Naive thymus-derived CD8-positive, alpha-beta T cell (primary cell): ENCODE measurements at regions of chr6 and their contacts with region 1.

Region 1: GRCh38 chr6:26223650-26224546 is 136.7 kb downstream of the HFE start:
- DNase-seq: peak; percentile 54 to 85 (median 71)
- ATAC-seq: peak; percentile 89 to 90
- H3K4me3 Mint-ChIP-seq: no peak overlapping the region
- H3K27ac Mint-ChIP-seq: no peak overlapping the region
- H3K4me1 Mint-ChIP-seq: peaks cover 4 to 25% (median 14%) of the 10 kb centered on the region in 4 donors
- H3K27me3 Mint-ChIP-seq: no peaks in the 10 kb centered on the region

Region 2: GRCh38 chr6:26183581-26184366 is 40.1 kb before region 1 on chr6:
- POLR2A ChIA-PET with region 1: interaction called, 25 read pairs
- DNase-seq: peak; percentile 22 to 82 (median 58)
- ATAC-seq: peak; percentile 92 to 94
- H3K4me3 Mint-ChIP-seq: peak overlapping the region; percentile 93 to 100 (median 98)
- H3K27ac Mint-ChIP-seq: peak overlapping the region; percentile 70 to 98 (median 95)
- H3K4me1 Mint-ChIP-seq: peaks cover 27 to 48% (median 46%) of the 10 kb centered on the region in 4 donors
- H3K27me3 Mint-ChIP-seq: no peaks in the 10 kb centered on the region

Region 3: GRCh38 chr6:26240154-26241032 is 16.5 kb after region 1 on chr6:
- POLR2A ChIA-PET with region 1: interaction called, 669 read pairs
- DNase-seq: peak; percentile 39 to 90 (median 80)
- ATAC-seq: peak; percentile 82 to 85
- H3K4me3 Mint-ChIP-seq: peak overlapping the region; percentile 82 to 95 (median 88)
- H3K27ac Mint-ChIP-seq: peak overlapping the region; percentile 92 to 99 (median 98)
- H3K4me1 Mint-ChIP-seq: peaks cover 9 to 25% (median 22%) of the 10 kb centered on the region in 4 donors
- H3K27me3 Mint-ChIP-seq: no peaks in the 10 kb centered on the region

Region 4: DNA sequence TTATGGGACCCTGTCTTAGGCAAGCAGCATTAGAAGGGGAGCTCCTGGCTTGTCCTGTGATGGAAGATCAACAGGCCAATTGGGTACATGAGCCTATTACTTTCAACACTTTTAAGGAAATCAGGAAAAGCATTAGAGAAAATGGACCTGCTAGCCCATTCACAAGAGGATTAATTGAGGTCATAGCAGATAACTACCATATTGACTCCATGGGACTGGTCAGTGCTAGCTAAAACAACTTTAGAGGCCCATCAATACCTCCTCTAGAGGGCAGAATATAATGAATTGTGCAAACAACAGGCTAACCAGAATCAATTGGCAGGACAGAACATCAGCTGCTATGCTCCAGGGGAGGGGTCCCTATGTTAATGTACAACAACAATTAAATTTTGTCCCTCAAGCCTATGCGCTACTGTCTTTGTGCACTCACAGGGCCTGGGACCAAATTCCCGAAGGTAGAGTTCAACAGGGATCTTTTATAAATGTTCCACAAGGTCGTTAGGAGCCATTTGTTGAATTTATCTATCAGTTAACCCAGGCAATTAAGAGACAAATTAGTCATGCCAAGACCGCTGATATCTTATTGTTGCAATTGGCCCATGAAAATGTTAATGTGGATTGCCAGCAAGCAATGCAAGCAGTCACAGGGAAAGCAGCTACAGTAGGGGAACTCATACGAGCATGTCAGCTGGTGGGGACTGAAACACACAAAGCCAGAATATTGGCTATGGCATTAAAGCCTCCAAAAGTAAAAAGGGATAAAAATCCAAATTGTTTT is 34.5 kb after region 1 on chr6:
- POLR2A ChIA-PET with region 1: no interaction called
- DNase-seq: no peak
- ATAC-seq: no peak
- H3K4me3 Mint-ChIP-seq: no peak overlapping the region
- H3K27ac Mint-ChIP-seq: no peak overlapping the region
- H3K4me1 Mint-ChIP-seq: peaks cover 0 to 11% (median 10%) of the 10 kb centered on the region in 4 donors
- H3K27me3 Mint-ChIP-seq: no peaks in the 10 kb centered on the region